Activated T-helper 1 cell treated with anti-CD3 and anti-CD28 coated beads, Interleukin-12 subunit alpha, Interleukin-12 subunit beta, Interleukin-2, Interleukin-4 antibody, amounts not matched to agents 30 ng/mL and 10 ng/mL and 1 ng/mL, durations not matched to agents 14 hours and 24 hours and 36 hours (primary cell): ENCODE measurements at regions of chr10 and their contacts with region 1.

Region 1: DNA sequence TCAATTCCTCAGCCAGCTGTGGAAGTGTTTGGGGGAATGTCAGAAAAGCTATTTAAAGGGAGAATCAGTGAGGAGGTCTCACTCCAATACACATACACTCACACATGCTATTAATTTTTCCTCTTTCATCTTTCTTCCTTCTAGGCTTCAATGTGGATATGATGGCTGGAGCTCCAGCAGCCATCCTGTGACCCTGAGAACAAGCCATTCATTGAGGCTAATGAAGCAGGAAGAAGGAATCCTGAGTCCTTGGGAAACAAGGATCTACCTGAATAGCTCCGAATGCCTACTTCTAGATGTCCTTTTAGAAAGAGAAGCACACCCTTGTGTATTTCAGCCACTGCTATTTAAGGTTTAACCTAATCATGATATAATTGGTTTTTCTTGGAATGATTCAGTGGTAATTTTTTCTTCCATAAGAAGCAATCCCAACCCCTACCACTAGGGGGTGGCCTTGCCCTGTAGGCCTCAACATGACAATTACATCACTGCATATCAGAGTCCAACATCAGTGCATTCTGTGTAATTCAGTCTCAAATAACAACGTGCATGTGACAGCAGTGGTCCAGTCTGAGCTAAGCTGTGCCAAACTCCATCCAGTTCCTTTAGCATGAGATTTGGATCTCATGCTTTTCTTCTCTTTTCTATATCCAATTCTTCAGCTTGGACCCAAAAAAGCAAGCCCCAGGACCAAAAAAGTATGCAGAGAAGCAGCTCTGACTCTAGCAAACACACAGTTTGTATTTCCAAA is 85.3 kb upstream of the ANKRD1 start:
- DNase-seq: peak; percentile 41
- H3K4me3 Mint-ChIP-seq: peak overlapping the region; percentile 8
- H3K27ac Mint-ChIP-seq: peak overlapping the region; percentile 58
- H3K4me1 Mint-ChIP-seq: peaks cover 27% of the 10 kb centered on the region
- H3K27me3 Mint-ChIP-seq: peaks cover 28% of the 10 kb centered on the region

Region 2: GRCh38 chr10:90912174-90912573 is 94.0 kb before region 1 on chr10:
- intact Hi-C with region 1: loop called (anchors 2 kb)
- DNase-seq: no peak
- H3K4me3 Mint-ChIP-seq: no peak overlapping the region
- H3K27ac Mint-ChIP-seq: no peak overlapping the region
- H3K4me1 Mint-ChIP-seq: no peaks in the 10 kb centered on the region
- H3K27me3 Mint-ChIP-seq: peaks cover 4% of the 10 kb centered on the region

Region 3: GRCh38 chr10:91088300-91089140 is 82.3 kb after region 1 on chr10:
- intact Hi-C with region 1: loop called (anchors 1 kb)
- DNase-seq: no peak
- H3K4me3 Mint-ChIP-seq: no peak overlapping the region
- H3K27ac Mint-ChIP-seq: no peak overlapping the region
- H3K4me1 Mint-ChIP-seq: no peaks in the 10 kb centered on the region
- H3K27me3 Mint-ChIP-seq: peaks cover 7% of the 10 kb centered on the region

Region 4: DNA sequence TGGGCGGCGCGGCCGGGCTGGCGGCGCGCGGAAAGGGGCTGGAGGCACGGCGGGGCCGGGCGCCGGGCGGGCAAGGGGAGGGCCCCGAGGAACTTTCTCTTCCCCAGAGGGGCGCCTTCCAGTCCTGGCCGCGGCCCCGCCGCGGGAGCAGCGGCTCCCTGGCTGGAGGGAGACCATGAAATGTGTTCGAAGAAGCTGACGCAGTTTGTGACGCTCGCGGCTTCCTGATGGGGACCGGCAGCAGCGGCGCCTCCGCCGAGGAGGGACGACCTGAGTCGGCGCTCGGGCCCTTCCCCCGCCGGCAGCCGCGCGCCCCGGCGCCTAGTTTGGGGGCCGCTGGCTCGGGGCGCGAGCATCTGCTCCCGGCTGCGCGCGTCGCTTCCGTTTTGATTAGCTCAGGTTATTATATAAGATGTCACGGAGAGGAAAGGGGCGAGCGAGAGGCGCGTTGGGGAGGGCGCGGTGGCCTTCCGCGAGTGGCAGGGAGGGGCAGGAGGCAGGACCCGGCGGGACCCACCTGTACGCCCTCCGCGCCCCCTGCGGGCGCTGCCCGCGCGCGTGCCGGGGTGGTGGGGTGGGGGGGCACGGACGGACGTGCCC is 157.2 kb after region 1 on chr10:
- intact Hi-C with region 1: loop called (anchors 1 kb)
- DNase-seq: peak; percentile 66
- H3K4me3 Mint-ChIP-seq: peak overlapping the region; percentile 90
- H3K27ac Mint-ChIP-seq: peak overlapping the region; percentile 90
- H3K4me1 Mint-ChIP-seq: peaks cover 39% of the 10 kb centered on the region
- H3K27me3 Mint-ChIP-seq: peaks cover 12% of the 10 kb centered on the region

Region 5: GRCh38 chr10:91201213-91201996 is 195.2 kb after region 1 on chr10:
- intact Hi-C with region 1: loop called (anchors 2 kb)
- DNase-seq: peak; percentile 47
- H3K4me3 Mint-ChIP-seq: peak overlapping the region; percentile 68
- H3K27ac Mint-ChIP-seq: peak overlapping the region; percentile 92
- H3K4me1 Mint-ChIP-seq: peaks cover 81% of the 10 kb centered on the region
- H3K27me3 Mint-ChIP-seq: no peaks in the 10 kb centered on the region

Region 6: DNA sequence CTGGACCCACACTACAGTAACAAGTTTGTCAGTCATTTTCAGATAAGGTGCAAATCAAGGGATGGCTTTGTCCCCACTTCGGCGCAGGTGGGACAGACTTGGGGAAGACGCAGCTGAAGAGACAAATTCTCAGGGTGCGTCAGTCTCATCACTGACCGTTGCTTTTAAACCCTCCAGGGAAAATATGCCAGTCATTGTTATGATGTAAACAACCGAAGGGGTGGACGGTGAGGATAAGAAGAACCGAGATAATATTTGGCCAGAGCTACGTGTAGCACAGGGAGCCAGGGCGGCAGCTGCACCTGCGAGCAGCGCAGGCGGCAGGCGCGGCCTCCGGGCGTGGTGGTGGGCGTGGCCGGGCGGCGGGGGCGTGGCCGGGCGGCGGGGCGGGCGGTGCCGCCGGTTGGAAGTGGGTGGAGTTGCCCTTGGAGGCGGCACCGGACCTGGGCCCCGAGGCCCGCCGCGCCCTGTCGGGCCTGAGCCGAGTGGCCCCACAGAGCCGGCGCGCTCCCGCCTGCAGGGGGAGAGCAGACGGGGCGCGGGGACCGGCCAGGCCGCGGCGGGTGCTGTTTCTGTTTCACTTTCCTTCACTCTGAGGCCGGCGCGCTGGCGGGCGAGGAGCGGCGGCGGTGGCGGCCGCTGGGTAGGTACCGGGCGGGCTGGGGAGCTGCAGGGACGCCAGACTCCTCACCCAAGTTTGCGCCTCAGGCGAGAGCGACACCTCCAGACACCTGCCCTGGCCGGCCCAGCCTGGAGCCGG is 214.2 kb after region 1 on chr10 and contains the start of gene PCGF5:
- intact Hi-C with region 1: loop called (anchors 1 kb)
- DNase-seq: peak; percentile 91
- H3K4me3 Mint-ChIP-seq: peak within 1 kb of the TSS; percentile 91
- H3K27ac Mint-ChIP-seq: peak within 1 kb of the TSS; percentile 79
- H3K4me1 Mint-ChIP-seq: peaks cover 54% of the 10 kb centered on the region
- H3K27me3 Mint-ChIP-seq: no peaks in the 10 kb centered on the region
- total RNA-seq, gene PCGF5: 51.7 TPM in 2 replicates

Region 7: DNA sequence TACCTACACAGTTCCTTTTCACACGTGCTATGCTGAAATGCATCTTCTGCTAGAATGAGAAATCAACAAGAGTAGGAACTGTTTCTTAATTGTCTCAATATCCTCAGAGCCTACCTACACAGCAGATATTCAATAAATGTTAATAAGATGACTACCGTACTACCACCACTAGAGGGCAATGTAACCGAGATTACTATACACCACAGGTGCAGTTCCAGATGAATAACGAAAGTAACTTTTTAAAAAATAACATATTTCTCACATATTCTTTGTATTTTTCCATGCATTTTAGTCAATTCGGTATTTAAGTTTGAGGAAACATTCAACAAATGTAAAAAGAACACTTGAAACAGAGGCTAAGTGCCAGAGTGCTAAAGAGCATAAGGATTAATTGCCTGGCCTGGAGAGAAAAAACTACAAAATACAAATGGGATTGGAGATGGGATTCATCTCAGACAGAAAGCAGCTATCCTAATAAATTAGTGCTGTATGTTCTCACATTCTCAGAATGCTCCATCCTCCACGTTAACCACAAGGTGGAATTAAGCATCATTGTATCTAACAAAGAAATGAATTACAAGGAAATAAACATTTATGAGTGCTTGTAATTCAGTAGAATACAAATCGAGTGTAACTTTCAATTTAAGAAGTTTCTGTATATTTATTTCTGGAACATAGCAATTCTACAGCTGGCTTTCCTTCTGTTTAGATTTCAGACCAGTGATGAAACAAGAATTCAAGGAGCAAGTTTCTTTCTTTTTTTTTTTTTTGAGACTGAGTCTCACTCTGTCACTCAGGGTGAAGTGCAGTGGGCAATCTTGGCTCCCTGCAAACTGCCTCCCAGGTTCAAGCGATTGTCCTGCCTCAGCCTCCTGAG is 383.7 kb after region 1 on chr10:
- intact Hi-C with region 1: loop called (anchors 5 kb)
- DNase-seq: no peak
- H3K4me3 Mint-ChIP-seq: no peak overlapping the region
- H3K27ac Mint-ChIP-seq: no peak overlapping the region
- H3K4me1 Mint-ChIP-seq: peaks cover 7% of the 10 kb centered on the region
- H3K27me3 Mint-ChIP-seq: peaks cover 16% of the 10 kb centered on the region